Endothelial cell of umbilical vein (primary cell): ENCODE measurements at regions of chr16 and their contacts with region 1.

Region 1: GRCh38 chr16:4475880-4476788 is at the start of gene HMOX2:
- DNase-seq: peak; percentile 95
- H3K4me3 ChIP-seq: peak within 1 kb of the TSS; percentile 37 to 84 (median 71)
- H3K27ac ChIP-seq: peak within 1 kb of the TSS; percentile 75
- H3K4me1 ChIP-seq: peaks cover 19% of the 10 kb centered on the region
- H3K27me3 ChIP-seq: no peaks in the 10 kb centered on the region
- CTCF ChIP-seq: peak; percentile 30 to 64
- POLR2A ChIP-seq: peak; percentile 94
- total RNA-seq, gene HMOX2: 80.7 and 92.6 TPM in 2 replicates

Region 2: DNA sequence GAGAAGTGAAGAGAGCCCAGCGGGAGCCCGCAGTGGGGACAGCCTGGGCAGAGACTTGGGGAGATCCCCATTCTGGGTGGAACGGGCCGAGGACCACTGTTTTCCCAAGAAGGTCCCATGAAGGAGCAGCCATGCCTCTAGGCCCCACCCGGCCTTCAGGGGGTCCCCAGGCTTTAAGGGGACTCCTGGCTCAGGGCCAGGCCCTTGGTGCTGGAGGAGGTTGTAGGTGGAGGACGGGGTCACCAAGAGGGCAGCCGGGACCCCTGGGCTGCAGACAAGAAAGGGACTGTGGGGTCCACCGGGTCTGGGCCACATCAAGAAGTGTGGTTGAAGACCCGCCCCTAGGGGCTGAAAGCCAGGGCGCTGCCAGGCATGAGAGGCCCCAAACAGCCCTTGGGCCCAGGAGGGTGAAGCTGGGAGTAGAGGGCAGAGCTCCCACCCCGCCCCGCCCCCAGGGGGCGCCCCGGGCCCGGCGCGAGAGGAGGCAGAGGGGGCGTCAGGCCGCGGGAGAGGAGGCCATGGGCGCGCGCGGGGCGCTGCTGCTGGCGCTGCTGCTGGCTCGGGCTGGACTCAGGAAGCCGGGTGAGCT is 1659.3 kb before region 1 on chr16 and contains the start of gene PRSS21:
- CTCF ChIA-PET with region 1: no interaction called
- POLR2A ChIA-PET with region 1: no interaction called
- dilution Hi-C with region 1: no loop called
- intact Hi-C with region 1: no loop called
- DNase-seq: no peak
- H3K4me3 ChIP-seq: no peak within 1 kb of the TSS
- H3K27ac ChIP-seq: no peak within 1 kb of the TSS
- H3K4me1 ChIP-seq: no peaks in the 10 kb centered on the region
- H3K27me3 ChIP-seq: no peaks in the 10 kb centered on the region
- CTCF ChIP-seq: peak in 1 of 2 donors; percentile 8
- POLR2A ChIP-seq: no peak
- total RNA-seq, gene PRSS21: not detected in 2 replicates

Region 3: DNA sequence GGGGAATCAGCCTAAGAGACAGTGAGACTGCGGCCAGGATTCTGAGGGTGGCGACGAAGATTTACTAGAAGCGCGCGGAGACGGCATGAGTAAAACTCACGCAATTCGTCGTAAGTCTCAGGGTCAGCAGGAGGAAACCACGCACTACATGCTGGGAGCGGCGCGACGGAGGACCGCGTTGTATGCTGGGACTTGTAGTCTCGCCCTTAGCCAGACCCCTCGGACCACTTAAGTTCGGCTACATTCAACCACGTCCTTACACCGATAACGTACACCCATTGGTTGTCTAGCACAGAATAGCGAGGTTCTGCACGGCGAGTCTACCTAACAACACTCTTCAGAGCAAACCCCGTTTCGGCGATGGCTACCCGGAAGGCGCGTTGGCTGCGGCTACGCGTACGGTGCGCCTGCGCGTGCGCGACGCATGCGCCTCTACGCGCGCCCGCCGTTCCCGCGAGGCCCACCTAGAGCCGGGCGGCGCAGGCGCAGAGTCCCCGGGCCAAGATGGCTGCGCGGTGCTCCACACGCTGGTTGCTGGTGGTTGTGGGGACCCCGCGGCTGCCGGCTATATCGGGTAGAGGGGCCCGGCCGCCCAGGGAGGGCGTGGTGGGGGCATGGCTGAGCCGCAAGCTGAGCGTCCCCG is 50.6 kb before region 1 on chr16 and contains the start of gene DNAJA3:
- CTCF ChIA-PET with region 1: no interaction called
- POLR2A ChIA-PET with region 1: no interaction called
- dilution Hi-C with region 1: no loop called
- intact Hi-C with region 1: loop called (anchors 5 kb)
- DNase-seq: peak; percentile 96
- H3K4me3 ChIP-seq: peak within 1 kb of the TSS; percentile 64 to 84 (median 81)
- H3K27ac ChIP-seq: peak within 1 kb of the TSS; percentile 93
- H3K4me1 ChIP-seq: peaks cover 16% of the 10 kb centered on the region
- H3K27me3 ChIP-seq: no peaks in the 10 kb centered on the region
- CTCF ChIP-seq: no peak
- POLR2A ChIP-seq: peak; percentile 93
- total RNA-seq, gene DNAJA3: 40.6 and 45.4 TPM in 2 replicates

Region 4: DNA sequence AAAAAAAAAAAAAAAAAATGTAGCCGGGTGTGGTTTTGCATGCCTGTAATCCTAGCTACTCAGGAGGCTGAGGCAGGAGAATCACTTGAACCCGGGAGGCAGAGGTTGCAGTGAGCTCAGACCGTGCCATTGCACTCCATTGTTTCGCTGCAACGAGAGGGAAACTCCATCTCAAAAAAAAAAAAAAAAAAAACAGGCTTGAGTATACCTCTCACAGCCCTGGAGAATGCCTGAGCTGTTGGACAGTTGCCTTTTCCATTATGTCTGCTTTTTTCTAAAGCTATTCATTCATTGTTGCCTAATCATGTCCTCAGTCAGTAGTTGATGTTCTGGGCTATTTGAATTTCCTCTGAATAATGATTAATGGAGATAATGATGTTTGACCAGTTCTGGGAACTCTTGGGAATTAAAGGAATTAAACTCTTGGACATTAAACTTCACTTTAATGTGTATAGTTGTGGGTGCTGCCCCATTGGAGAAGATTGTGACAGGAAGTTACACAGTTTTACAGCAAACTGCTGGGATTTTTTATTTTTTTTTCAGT is 11.9 kb after region 1 on chr16:
- CTCF ChIA-PET with region 1: interaction called, 31 read pairs
- POLR2A ChIA-PET with region 1: no interaction called
- dilution Hi-C with region 1: no loop called
- intact Hi-C with region 1: no loop called
- DNase-seq: peak; percentile 76
- H3K4me3 ChIP-seq: no peak overlapping the region
- H3K27ac ChIP-seq: peak overlapping the region; percentile 21
- H3K4me1 ChIP-seq: peaks cover 15% of the 10 kb centered on the region
- H3K27me3 ChIP-seq: no peaks in the 10 kb centered on the region
- CTCF ChIP-seq: no peak
- POLR2A ChIP-seq: no peak

Region 5: GRCh38 chr16:4500272-4500671 is 24.1 kb after region 1 on chr16:
- CTCF ChIA-PET with region 1: interaction called, 39 read pairs
- POLR2A ChIA-PET with region 1: interaction called, 4 read pairs
- dilution Hi-C with region 1: no loop called
- intact Hi-C with region 1: loop called (anchors 1 kb)
- DNase-seq: peak; percentile 83
- H3K4me3 ChIP-seq: peak overlapping the region in 1 of 3 experiments; percentile 31
- H3K27ac ChIP-seq: peak overlapping the region; percentile 76
- H3K4me1 ChIP-seq: peaks cover 27% of the 10 kb centered on the region
- H3K27me3 ChIP-seq: no peaks in the 10 kb centered on the region
- CTCF ChIP-seq: no peak
- POLR2A ChIP-seq: no peak

Region 6: DNA sequence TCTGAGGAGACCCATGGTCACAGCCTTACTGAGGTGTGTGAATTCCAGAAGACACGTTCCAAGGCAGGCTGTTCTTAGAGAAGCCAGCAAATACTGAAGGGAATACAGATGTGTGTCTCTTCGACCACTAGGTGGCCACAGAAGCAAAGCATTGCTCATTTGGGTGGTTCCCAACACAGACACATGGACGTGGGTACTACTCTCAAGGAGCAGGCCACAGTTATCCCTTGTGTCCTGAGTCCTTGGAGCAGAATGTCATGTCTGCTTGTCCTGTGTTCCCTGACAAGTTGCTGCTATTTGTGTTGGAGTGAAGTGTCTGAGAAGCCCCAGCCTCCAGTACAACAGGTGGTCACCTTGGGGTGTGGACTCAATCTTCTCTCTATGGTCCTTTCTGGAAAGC is 30.3 kb after region 1 on chr16:
- CTCF ChIA-PET with region 1: interaction called, 39 read pairs
- POLR2A ChIA-PET with region 1: no interaction called
- dilution Hi-C with region 1: no loop called
- intact Hi-C with region 1: no loop called
- DNase-seq: peak; percentile 77
- H3K4me3 ChIP-seq: no peak overlapping the region
- H3K27ac ChIP-seq: no peak overlapping the region
- H3K4me1 ChIP-seq: peaks cover 5% of the 10 kb centered on the region
- H3K27me3 ChIP-seq: no peaks in the 10 kb centered on the region
- CTCF ChIP-seq: peak; percentile 83 to 85
- POLR2A ChIP-seq: no peak

Region 7: DNA sequence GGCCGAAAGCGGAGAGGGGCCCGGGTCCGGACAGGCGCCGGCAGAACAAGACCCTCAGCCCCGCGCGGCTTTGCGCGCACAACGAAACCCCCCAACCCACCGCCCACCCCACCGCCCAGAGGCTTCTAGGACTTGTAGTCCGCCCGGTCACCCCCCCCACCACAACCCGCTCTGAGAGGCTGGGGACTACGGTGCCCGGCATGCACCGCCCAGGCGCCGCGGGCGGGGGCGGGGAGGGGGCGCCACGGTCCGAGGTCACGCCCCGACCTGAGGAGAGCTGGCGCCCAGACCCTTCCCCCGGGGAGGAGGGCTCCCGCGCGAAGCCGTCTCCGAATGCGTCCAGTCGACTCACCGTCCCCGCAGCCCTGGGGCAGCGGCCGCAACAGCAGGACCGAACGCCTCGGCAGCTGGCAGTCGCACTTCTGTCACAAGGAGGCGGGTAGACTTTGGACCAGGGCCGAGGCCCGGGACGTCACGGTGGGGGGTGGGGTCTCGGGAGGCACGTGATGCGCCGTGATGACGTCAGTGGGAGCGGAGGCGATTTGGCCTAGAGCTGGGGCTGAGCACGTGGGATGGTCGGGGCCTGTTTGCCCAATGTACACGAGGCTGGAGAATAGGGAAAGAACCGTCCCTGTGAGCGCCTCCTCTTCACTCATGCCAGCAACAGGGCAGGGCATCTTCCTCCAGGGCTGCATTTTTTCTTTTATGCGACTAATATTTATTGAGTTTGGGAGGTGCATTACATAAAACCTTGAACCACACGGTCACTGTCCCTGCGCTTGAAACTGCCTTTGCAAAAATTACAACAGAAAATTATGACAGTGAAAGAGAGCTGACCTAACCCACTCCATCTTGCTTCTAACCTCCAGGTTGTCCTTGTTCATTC is 62.5 kb after region 1 on chr16 and contains the start of gene CDIP1:
- CTCF ChIA-PET with region 1: interaction called, 6 read pairs
- POLR2A ChIA-PET with region 1: interaction called, 6 read pairs
- dilution Hi-C with region 1: no loop called
- intact Hi-C with region 1: loop called (anchors 2 kb)
- DNase-seq: peak; percentile 97
- H3K4me3 ChIP-seq: peak within 1 kb of the TSS; percentile 50 to 60 (median 57)
- H3K27ac ChIP-seq: peak within 1 kb of the TSS; percentile 25
- H3K4me1 ChIP-seq: peaks cover 4% of the 10 kb centered on the region
- H3K27me3 ChIP-seq: peaks cover 0 to 2% of the 10 kb centered on the region in 2 experiments
- CTCF ChIP-seq: peak in 1 of 2 donors; percentile 3
- POLR2A ChIP-seq: peak; percentile 72
- total RNA-seq, gene CDIP1: 22.4 and 33.9 TPM in 2 replicates

Region 8: GRCh38 chr16:4915226-4915761 is 439.2 kb after region 1 on chr16:
- CTCF ChIA-PET with region 1: no interaction called
- POLR2A ChIA-PET with region 1: no interaction called
- dilution Hi-C with region 1: no loop called
- intact Hi-C with region 1: no loop called
- DNase-seq: no peak
- H3K4me3 ChIP-seq: no peak overlapping the region
- H3K27ac ChIP-seq: no peak overlapping the region
- H3K4me1 ChIP-seq: no peaks in the 10 kb centered on the region
- H3K27me3 ChIP-seq: no peaks in the 10 kb centered on the region
- CTCF ChIP-seq: no peak
- POLR2A ChIP-seq: no peak